ENCODE measurements at regions of chr17 and their contacts with region 1.

Region 1: DNA sequence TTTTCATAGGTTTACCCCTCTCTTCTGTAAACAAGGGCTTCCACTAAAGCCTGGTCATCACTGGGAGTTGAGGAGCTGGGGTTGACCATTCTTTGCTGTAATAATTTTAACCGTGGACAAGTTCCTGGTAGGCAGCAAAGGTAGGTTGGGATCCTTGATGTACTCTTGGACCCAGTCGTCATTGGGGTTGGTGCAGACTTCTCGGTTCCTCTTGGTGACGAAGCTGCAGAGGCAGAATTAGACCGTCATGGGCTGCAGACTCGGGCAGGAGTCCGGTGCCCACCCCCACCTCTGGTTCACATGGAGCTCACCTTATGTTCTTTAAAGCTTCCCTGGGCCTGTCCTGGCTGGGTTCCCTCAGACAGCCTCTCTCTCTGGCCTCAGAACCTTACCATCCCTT is 3.8 kb downstream of the CCL16 start:
- DNase-seq: no peak
- ATAC-seq: no peak

Region 2: DNA sequence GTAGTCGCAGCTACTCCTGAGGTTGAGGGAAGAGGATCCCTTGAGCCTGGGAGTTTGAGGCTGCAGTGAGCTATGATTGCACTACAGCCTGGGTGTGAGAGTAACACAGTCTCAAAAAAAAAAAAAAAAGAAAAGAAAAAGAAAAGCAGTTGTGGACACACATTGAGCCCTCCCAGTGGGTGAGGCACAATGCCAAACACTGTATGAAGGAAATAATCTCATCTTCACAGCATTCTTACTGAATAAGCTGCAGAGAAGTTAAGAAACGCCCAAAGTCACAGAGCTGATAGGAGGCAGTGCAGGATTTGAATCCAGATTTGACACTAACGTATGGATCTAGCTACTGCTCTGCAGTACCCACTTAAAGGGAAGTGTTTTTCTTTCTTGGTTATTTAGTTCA is 28.1 kb before region 1 on chr17:
- intact Hi-C with region 1: no loop called
- DNase-seq: no peak
- ATAC-seq: no peak

Region 3: GRCh38 chr17:36148559-36149295 is 171.2 kb after region 1 on chr17:
- intact Hi-C with region 1: loop called (anchors 5 kb)
- DNase-seq: peak; percentile 78
- ATAC-seq: peak; percentile 98